HEK293 (cell line): ENCODE measurements at regions of chr18 and their contacts with region 1.

Region 1: GRCh38 chr18:32771871-32772580 is 797 bp downstream of the KLHL14 start:
- H3K4me3 ChIP-seq: peak overlapping the region; percentile 51
- H3K27ac ChIP-seq: peak overlapping the region; percentile 61
- H3K4me1 ChIP-seq: peaks cover 3% of the 10 kb centered on the region; the same call in 1 of the 2 replicates
- CTCF ChIP-seq: no peak

Region 2: DNA sequence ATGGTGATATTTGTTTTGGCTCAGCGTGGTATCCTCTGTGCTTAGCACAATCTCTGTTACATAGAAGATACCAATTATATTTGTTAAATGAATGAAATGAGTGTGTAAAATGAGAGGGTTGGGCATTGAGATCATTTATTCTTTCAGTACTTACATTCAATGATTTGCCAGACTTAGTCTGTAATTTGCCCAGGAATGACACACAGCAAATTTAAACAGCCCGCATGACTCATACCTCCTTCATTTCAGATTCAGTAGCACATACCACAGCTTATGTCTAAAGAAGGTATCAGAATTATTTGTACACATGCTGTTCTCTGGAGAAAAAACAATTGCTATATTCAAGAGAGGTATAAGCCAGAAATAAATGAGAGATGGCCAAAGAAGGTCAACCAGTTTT is 36.2 kb before region 1 on chr18:
- CTCF ChIA-PET with region 1: interaction called, 3 read pairs
- POLR2A ChIA-PET with region 1: interaction called, 11 read pairs
- H3K4me3 ChIP-seq: no peak overlapping the region
- H3K27ac ChIP-seq: no peak overlapping the region
- H3K4me1 ChIP-seq: no peaks in the 10 kb centered on the region
- CTCF ChIP-seq: no peak